Activated CD4-positive, alpha-beta T cell treated with anti-CD3 and anti-CD28 coated beads, Interleukin-2, amount 10 ng/mL, durations not matched to agents 24 days and 14 days (primary cell): ENCODE measurements at regions of chr5 and their contacts with region 1.

Region 1: DNA sequence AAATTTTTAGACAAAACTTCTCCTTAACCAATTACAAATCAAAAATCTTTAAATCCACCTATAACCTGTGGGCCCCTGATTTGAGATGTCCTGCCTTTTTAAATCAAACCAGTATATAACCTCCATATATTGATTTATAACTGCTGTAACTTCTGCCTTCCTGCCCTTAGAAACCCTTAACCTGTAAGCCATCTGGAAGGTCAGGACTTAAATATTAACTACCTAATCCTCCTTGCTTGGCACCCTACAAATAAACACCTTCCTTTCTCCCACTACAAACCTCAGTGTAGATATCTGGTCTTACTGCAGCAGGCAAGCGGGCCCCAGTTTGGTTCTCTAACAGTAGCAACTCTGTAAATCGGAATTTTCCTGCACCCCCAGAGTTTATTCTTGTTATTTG is 83.9 kb downstream of the MTREX start:
- DNase-seq: no peak
- H3K4me3 Mint-ChIP-seq: no peak overlapping the region
- H3K27ac Mint-ChIP-seq: no peak overlapping the region
- H3K4me1 Mint-ChIP-seq: peaks cover 4% of the 10 kb centered on the region
- H3K27me3 Mint-ChIP-seq: no peaks in the 10 kb centered on the region

Region 2: GRCh38 chr5:55344392-55344992 is 47.2 kb before region 1 on chr5:
- intact Hi-C with region 1: loop called (anchors 10 kb)
- DNase-seq: peak; percentile 89
- H3K4me3 Mint-ChIP-seq: no peak overlapping the region
- H3K27ac Mint-ChIP-seq: peak overlapping the region; percentile 62
- H3K4me1 Mint-ChIP-seq: peaks cover 9% of the 10 kb centered on the region
- H3K27me3 Mint-ChIP-seq: no peaks in the 10 kb centered on the region

Region 3: GRCh38 chr5:55360190-55360589 is 31.5 kb before region 1 on chr5:
- intact Hi-C with region 1: no loop called
- DNase-seq: no peak
- H3K4me3 Mint-ChIP-seq: no peak overlapping the region
- H3K27ac Mint-ChIP-seq: no peak overlapping the region
- H3K4me1 Mint-ChIP-seq: peaks cover 9% of the 10 kb centered on the region
- H3K27me3 Mint-ChIP-seq: no peaks in the 10 kb centered on the region